BJ (cell line): ENCODE measurements at regions of chr16 and their contacts with region 1.

Region 1: DNA sequence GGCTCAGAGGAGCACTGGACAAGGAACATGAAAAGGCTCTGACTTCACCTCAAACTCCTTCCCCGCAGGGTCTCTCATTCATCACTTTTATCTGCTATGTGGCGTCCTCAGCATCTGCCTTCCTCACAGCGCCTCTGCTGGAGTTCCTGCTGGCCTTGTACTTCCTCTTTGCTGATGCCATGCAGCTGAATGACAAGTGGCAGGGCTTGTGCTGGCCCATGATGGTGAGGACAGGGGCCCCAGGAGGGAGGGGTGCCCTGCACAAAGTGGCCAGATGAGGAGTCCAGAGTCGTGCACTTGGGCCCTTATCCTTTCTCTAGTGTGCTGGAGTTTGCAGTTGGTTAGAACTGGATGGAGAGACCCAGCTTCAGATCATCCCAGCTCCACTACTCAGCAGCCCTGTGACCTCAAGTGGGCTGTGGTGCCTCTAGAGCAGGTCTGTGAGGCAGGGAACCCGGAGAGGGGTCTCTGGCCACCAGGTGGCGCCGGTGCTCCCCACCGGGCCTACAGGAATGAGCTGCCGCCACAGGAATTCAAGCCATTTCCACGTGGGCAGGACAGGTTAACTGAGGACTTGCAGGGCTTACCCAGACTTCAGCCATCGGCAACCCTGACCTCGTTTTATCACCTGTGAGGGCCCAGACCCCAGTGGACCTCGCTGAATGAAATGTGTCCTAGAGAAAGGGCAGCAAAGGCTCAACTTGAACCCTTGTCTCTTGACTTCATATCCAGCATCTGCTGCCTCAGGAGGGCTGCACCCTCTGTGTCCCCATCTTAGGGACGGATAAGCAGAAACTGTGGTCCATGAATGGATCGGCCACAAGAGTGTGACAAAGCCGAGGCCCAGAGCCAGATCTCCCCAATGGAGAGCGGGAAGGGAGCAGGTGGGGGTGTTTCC is 4.0 kb downstream of the CMTM3 start:
- DNase-seq: peak; percentile 32
- H3K4me3 ChIP-seq: no peak overlapping the region
- H3K27me3 ChIP-seq: no peaks in the 10 kb centered on the region
- CTCF ChIP-seq: peak; percentile 94

Region 2: GRCh38 chr16:66618588-66619375 is 10.3 kb after region 1 on chr16:
- CTCF ChIA-PET with region 1: interaction called, 41 read pairs
- POLR2A ChIA-PET with region 1: no interaction called
- DNase-seq: peak; percentile 96
- H3K4me3 ChIP-seq: no peak overlapping the region
- H3K27me3 ChIP-seq: no peaks in the 10 kb centered on the region
- CTCF ChIP-seq: no peak

Region 3: DNA sequence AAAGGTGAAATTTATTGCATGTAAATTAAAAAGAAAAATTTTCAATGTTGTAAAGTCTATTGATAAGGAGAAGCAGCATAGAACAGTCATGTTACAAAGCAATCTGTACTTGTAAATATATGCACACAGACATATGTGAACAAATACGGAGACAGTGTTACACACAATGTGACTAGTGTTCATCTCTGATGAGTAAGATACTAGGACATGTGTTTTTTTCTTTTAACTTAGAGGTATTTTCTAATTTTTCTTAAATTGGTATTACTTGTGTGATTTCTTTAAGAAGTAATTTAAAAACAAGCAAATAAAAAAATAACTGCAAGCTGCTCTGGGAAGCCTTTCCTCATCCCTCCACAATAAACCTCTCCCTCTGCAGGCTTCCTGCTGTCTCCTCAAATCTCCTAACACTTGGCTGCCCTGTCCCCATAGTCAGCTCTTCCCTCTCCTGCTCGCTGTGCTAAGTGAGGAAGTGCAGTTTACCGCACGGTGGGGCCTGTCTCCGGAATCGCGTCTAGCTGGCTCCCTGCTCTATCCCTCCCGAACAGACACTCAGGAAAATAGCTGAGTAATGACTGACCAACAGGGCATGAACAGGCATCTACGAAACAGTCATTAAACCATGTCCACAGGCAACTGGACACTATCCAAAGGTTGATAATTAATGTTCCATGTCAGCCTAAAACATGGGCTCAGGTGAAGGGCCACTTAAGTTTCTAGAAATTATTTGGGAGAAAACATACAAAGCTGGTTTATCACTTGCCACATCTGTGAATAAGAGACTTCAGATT is 52.1 kb after region 1 on chr16:
- CTCF ChIA-PET with region 1: interaction called, 31 read pairs
- POLR2A ChIA-PET with region 1: no interaction called
- DNase-seq: peak; percentile 85
- H3K4me3 ChIP-seq: no peak overlapping the region
- H3K27me3 ChIP-seq: no peaks in the 10 kb centered on the region
- CTCF ChIP-seq: peak; percentile 58